Left colon (tissue), 2 donors: ENCODE measurements at regions of chr17 and their contacts with region 1.

Region 1: DNA sequence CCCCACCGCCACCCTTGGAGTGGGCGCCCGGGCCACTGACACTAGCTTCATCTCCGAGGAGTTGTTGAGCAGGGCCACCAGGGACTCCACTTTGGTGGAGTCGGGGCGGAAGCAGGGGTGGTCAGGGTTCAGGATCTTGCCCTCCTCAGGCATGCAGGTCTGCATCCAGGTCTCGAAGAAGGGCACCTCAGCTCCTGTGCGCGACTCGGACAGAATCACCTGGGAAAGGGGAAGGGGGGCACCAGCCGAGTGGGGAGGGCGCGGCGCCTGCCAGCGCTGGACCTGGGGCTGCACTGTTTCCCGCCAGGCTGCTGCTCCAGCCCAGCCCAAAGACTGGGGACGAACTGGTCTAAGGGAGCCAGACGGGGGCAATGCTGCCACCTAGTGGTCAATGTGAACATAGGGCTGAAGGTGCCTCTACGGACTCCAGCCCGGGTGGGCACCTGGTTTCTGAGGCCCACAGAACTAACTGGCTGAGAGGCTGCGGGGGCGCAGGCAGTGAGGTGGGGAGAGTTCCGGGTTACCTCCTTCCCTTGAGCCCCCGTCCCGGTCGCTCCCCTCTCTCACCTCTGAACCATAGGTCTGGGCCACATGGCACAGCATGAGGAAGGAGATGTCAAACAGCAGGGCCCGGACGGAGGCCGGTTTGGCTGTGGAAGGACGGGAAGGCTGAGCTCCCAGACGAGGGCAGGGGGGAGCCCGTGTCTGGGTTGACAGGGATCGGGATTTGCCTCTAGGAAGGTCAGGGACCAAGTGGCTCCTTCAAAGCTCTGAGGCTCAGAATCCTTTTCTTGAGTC is 11.8 kb downstream of the CSF3 start:
- DNase-seq: peak; percentile 81 to 84
- ATAC-seq: peak; percentile 65

Region 2: DNA sequence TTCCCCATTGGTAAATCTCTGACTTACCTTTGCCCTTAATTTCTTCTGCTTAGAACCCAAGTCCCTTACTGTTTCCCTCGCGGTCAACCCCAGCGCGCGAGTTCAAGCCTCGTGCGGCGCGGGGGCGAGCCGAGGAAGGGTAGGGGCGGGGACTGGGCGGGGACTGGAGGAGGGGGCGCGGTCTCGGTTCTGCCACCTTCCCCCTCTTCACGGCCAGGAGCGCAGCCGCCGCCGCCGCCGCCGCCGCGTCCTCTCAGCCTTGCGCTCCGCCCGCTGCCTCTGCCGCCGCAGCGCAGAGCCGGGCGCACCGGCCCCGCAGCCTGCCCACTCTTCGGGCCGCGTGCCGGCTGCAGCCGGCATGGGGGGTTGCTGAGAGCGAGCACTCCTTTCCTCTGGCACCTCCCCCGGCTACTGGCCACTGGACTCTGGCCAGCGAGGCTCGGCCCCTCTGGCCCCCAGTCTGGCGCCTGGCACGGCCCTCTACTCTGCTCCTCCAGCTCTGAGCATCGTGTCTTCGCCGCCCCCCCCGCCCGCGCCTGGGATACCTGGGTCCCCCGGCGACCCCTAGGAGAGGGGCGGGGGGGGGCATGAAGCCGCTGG is 150.4 kb after region 1 on chr17 and contains the start of gene RAPGEFL1:
- intact Hi-C with region 1: loop called in 1 of 2 experiments (anchors 10 kb)
- DNase-seq: peak; percentile 84 to 92
- ATAC-seq: peak; percentile 51
- total RNA-seq, gene RAPGEFL1: 149 to 194 TPM